Colonic mucosa (tissue), 4 donors: ENCODE measurements at regions of chr13 and their contacts with region 1.

Region 1: GRCh38 chr13:73715114-73715910 is 418.9 kb downstream of the KLF12 start:
- DNase-seq: no peak
- H3K4me3 ChIP-seq: no peak overlapping the region
- H3K27ac ChIP-seq: peak overlapping the region; percentile 22
- H3K4me1 ChIP-seq: no peaks in the 10 kb centered on the region
- H3K27me3 ChIP-seq: no peaks in the 10 kb centered on the region
- CTCF ChIP-seq: no peak

Region 2: DNA sequence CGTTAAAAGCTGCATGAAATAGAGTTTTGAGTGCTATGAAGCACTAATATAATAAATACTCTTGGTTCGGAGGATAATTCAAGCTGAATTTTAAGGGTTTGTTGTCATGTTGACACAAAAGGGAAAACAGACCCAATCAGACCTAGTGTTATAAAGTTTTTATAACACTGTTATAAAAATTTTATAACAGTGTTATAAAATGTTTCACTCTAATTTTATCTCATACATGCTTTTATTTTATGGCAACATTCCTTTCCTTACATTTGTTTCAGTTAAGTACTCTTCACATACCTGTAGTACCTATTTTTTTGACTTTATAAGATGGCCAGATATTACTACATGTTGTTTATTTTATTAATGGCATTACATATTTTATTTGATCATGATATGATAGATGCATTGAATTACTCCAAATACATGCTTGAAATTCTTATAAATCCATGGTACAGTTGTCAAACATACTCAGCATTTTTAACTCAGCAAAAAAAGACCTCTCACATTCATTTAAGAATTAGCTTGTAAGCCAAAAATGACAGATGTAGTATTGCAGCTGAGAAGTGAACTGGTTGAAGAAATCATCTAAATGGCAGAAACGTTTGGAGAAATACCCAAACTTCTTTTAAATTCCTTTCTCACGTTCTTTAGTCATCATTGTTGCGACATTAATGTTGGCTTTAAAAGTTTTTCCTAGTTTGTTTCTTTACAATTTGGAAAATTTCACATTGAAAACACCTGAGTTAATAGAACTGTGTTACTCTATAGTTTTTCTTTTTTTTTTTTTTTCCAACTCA is 828.8 kb before region 1 on chr13:
- intact Hi-C with region 1: no loop called
- DNase-seq: no peak
- H3K4me3 ChIP-seq: no peak overlapping the region
- H3K27ac ChIP-seq: no peak overlapping the region
- H3K4me1 ChIP-seq: no peaks in the 10 kb centered on the region
- H3K27me3 ChIP-seq: no peaks in the 10 kb centered on the region
- CTCF ChIP-seq: no peak

Region 3: GRCh38 chr13:73058736-73059459 is 656.4 kb before region 1 on chr13 and contains the start of gene KLF5:
- intact Hi-C with region 1: loop called (anchors 10 kb)
- DNase-seq: peak; percentile 99
- H3K4me3 ChIP-seq: peak within 1 kb of the TSS; percentile 77
- H3K27ac ChIP-seq: peak within 1 kb of the TSS; percentile 72
- H3K4me1 ChIP-seq: no peaks in the 10 kb centered on the region
- H3K27me3 ChIP-seq: no peaks in the 10 kb centered on the region
- CTCF ChIP-seq: no peak
- total RNA-seq, gene KLF5: 334 to 424 TPM

Region 4: GRCh38 chr13:73938375-73939070 is 223.2 kb after region 1 on chr13:
- intact Hi-C with region 1: no loop called
- DNase-seq: no peak
- H3K4me3 ChIP-seq: no peak overlapping the region
- H3K27ac ChIP-seq: no peak overlapping the region
- H3K4me1 ChIP-seq: no peaks in the 10 kb centered on the region
- H3K27me3 ChIP-seq: no peaks in the 10 kb centered on the region
- CTCF ChIP-seq: no peak